ENCODE measurements at regions of chr10 and their contacts with region 1.

Region 1: GRCh38 chr10:108544494-108545120 is 1378.7 kb downstream of the XPNPEP1 start:
- DNase-seq: peak; percentile 36
- H3K4me3 ChIP-seq: no peak overlapping the region
- H3K27ac ChIP-seq: no peak overlapping the region
- H3K4me1 ChIP-seq: no peaks in the 10 kb centered on the region
- H3K27me3 ChIP-seq: no peaks in the 10 kb centered on the region
- CTCF ChIP-seq: peak; percentile 75 to 93

Region 2: DNA sequence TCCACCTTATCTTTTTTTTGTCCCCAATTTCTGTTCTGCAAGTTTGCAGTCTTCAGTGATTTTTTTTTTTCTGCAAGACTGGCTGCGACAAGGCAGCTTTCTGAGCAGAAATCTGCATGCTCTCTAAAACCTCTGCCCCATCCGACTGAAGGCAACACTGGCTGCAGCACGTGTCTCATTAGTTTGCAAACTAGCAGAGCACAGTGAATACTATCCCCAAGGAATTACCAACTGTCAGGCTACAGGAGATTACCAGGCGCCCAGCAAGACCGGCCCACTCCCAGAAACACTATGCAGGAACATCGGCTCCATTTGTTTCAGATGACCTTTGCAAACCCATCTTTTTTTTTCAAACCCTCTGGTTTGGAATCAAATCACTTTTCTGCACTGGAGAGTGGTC is 1918.9 kb before region 1 on chr10:
- CTCF ChIA-PET with region 1: no interaction called
- dilution Hi-C with region 1: no loop called
- in situ Hi-C with region 1: no loop called
- intact Hi-C with region 1: loop called (anchors 5 kb)
- DNase-seq: no peak
- H3K4me3 ChIP-seq: no peak overlapping the region
- H3K27ac ChIP-seq: no peak overlapping the region
- H3K4me1 ChIP-seq: peaks cover 4% of the 10 kb centered on the region
- H3K27me3 ChIP-seq: no peaks in the 10 kb centered on the region
- CTCF ChIP-seq: no peak

Region 3: DNA sequence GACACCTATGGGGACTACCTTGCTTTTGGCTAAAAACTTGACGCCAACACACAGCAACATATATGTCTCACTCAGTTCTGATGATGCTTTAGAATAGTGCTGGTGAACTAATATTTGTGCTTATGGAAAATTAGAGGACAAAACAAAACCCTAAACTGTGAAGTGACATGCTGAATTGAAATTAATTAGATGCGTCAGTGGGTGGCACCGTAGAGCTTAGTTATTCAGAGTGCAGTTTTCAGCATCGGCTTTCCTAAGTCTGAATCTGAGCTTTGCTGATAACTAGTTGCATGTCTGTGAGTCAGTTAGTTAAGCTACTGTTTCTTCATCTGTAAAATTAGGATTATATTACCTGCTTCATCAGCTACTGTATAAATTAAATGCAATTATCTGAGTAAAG is 1135.1 kb before region 1 on chr10:
- CTCF ChIA-PET with region 1: no interaction called
- dilution Hi-C with region 1: no loop called
- in situ Hi-C with region 1: no loop called
- intact Hi-C with region 1: loop called (anchors 2 kb)
- DNase-seq: peak; percentile 14
- H3K4me3 ChIP-seq: no peak overlapping the region
- H3K27ac ChIP-seq: no peak overlapping the region
- H3K4me1 ChIP-seq: no peaks in the 10 kb centered on the region
- H3K27me3 ChIP-seq: no peaks in the 10 kb centered on the region
- CTCF ChIP-seq: peak; percentile 35 to 56

Region 4: DNA sequence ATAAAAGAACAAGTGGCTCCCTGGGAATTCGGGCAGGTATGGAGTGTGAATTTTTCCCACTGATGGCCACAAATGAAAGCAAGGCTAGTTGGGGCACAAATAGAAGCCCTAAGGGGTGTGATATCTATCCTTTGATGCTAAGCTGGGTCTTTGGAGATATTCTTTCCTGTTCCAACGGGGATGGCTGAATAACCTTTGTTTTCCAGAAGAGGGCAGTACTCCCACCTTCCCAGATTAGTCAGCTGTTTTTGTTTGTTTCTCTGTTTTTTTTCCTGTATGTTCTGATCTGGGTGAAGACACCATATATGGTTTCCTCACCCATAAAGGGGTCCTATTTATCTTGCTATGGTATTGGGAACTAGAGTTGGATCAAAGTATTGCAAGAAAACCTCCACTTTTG is 432.4 kb before region 1 on chr10:
- CTCF ChIA-PET with region 1: no interaction called
- dilution Hi-C with region 1: no loop called
- in situ Hi-C with region 1: no loop called
- intact Hi-C with region 1: loop called (anchors 2 kb)
- DNase-seq: peak; percentile 8
- H3K4me3 ChIP-seq: no peak overlapping the region
- H3K27ac ChIP-seq: no peak overlapping the region
- H3K4me1 ChIP-seq: no peaks in the 10 kb centered on the region
- H3K27me3 ChIP-seq: no peaks in the 10 kb centered on the region
- CTCF ChIP-seq: peak; percentile 44 to 47

Region 5: DNA sequence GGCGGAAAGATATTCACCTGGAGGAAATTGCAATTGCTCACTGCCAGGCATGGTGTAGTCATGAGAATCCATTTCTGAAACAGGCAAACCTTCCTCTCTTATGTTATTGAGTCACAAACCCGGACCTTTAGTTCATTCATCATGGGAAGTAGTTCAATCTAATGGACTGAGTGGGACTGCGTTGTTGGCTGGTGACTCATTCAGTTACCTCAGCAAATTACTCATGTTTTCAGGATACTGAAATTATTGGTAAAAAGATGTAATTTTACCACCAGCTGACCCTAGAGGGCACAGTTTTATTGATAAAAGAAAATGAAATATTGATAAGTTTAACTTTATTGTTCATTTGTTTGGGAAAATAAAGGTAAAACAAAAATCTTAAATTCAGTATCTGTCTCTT is 185.7 kb before region 1 on chr10:
- CTCF ChIA-PET with region 1: no interaction called
- dilution Hi-C with region 1: no loop called
- in situ Hi-C with region 1: no loop called
- intact Hi-C with region 1: loop called (anchors 2 kb)
- DNase-seq: peak; percentile 96
- H3K4me3 ChIP-seq: no peak overlapping the region
- H3K27ac ChIP-seq: peak overlapping the region; percentile 45
- H3K4me1 ChIP-seq: peaks cover 25% of the 10 kb centered on the region
- H3K27me3 ChIP-seq: no peaks in the 10 kb centered on the region
- CTCF ChIP-seq: peak in 1 of 2 donors; percentile 18

Region 6: GRCh38 chr10:108465871-108466641 is 78.6 kb before region 1 on chr10:
- CTCF ChIA-PET with region 1: no interaction called
- dilution Hi-C with region 1: no loop called
- in situ Hi-C with region 1: no loop called
- intact Hi-C with region 1: no loop called
- DNase-seq: peak; percentile 1
- H3K4me3 ChIP-seq: peak overlapping the region; percentile 9 to 35 (median 31)
- H3K27ac ChIP-seq: no peak overlapping the region
- H3K4me1 ChIP-seq: peaks cover 3% of the 10 kb centered on the region
- H3K27me3 ChIP-seq: peaks cover 12% of the 10 kb centered on the region
- CTCF ChIP-seq: no peak

Region 7: DNA sequence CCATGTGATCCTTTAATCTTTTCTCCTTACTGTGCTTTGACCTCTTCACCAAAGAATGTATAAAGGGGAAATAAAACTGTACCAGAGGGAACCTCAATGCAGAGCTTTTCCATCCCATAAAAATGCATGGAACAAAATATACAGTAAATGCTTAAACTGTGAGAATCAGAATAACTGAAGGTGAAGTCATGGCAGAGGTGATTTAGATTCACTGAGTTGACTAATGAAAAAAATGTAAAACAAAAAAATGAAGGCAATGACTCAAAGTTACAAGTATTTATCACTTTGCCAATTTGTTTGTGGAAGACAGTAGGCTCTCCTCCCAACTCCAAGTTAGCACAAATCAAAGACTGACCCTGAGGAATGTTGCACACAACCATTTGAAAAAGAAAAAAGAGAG is 48.5 kb before region 1 on chr10:
- CTCF ChIA-PET with region 1: no interaction called
- dilution Hi-C with region 1: no loop called
- in situ Hi-C with region 1: no loop called
- intact Hi-C with region 1: no loop called
- DNase-seq: no peak
- H3K4me3 ChIP-seq: no peak overlapping the region
- H3K27ac ChIP-seq: no peak overlapping the region
- H3K4me1 ChIP-seq: no peaks in the 10 kb centered on the region
- H3K27me3 ChIP-seq: no peaks in the 10 kb centered on the region
- CTCF ChIP-seq: no peak

Region 8: GRCh38 chr10:108673741-108674140 is 129.1 kb after region 1 on chr10:
- CTCF ChIA-PET with region 1: no interaction called
- dilution Hi-C with region 1: no loop called
- in situ Hi-C with region 1: no loop called
- intact Hi-C with region 1: no loop called
- DNase-seq: no peak
- H3K4me3 ChIP-seq: no peak overlapping the region
- H3K27ac ChIP-seq: no peak overlapping the region
- H3K4me1 ChIP-seq: no peaks in the 10 kb centered on the region
- H3K27me3 ChIP-seq: no peaks in the 10 kb centered on the region
- CTCF ChIP-seq: no peak

Measured in mammary epithelial cell (primary cell).